ENCODE measurements at regions of chr11 and their contacts with region 1.

Region 1: DNA sequence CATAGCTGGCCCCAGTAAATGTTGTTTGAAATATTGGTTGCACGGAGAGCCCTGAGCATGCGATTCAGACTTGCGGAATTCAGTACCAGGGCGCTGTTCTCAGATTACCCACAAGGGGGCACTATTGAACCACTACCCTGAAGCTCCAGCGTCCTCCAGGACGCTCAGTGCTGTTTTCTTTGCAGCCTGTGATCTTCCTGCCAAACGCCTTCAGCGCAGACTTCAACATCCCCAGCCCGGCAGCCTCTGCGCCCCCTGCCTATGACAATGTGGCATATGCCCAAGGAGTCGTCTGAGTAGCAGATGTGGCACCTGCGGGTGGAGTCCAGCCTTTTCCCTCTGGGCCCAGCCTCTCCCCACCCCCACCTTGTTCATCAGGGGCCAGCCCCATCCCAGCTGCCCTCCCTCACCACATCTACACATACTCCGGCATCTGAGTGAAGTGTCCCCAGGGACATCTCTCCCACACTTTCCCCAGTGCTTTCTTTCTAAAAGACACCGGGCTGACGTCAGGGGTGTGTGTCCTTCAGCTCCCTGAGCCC is 9.6 kb upstream of the MS4A10 start:
- DNase-seq: peak; percentile 91
- H3K4me3 ChIP-seq: no peak overlapping the region
- H3K27ac ChIP-seq: no peak overlapping the region
- H3K4me1 ChIP-seq: no peaks in the 10 kb centered on the region
- CTCF ChIP-seq: peak; percentile 93

Region 2: GRCh38 chr11:60887556-60887955 is 112.1 kb after region 1 on chr11:
- CTCF ChIA-PET with region 1: no interaction called
- POLR2A ChIA-PET with region 1: no interaction called
- intact Hi-C with region 1: loop called (anchors 1 kb)
- DNase-seq: peak; percentile 57
- H3K4me3 ChIP-seq: no peak overlapping the region
- H3K27ac ChIP-seq: no peak overlapping the region
- H3K4me1 ChIP-seq: no peaks in the 10 kb centered on the region
- CTCF ChIP-seq: peak; percentile 79

Region 3: DNA sequence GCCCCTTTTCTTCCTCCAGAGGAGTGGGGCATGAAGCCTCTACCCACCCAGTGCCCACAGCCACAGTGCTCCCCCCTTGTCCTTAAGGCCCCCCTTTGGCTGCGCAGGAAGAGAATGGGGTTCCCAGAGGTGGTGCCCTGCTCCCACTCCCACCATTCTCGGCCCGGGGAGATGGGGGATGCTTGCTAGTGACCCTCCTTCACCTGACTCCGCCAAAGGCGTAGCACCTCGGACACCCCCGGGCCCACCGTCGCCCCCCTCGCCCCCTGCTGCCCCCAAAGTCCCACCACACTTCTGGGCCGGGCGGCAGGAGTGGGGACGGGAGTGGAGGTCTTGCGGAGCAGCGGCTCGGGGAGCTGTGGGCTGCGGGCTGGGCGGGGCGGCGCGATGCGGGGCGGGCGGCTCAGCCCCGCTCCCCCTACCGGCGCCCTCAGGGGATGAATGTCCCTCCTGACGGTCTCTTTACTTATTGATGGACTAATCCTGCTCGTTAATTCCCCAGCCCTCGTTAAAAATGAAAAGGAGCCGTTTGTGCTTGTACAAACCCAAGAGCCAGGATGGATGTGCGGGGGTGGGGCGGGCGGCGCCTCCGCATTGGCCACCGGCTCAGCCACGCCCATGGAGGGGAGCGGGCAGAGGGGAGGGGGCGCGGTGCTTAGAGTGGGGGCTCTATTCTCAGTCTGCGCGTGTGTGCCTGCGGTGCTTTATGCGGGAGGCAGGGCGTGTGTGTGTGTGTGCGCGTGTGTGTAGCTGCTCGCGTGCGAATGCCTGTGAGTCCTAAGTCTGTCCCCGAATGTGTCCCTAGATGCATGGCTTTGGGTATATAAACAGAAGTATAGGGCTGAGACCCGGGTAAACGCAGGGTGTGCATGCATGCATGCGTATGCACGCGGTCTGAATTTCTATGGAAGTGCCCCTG is 779.8 kb after region 1 on chr11:
- CTCF ChIA-PET with region 1: no interaction called
- POLR2A ChIA-PET with region 1: no interaction called
- intact Hi-C with region 1: no loop called
- DNase-seq: no peak
- H3K4me3 ChIP-seq: no peak overlapping the region
- H3K27ac ChIP-seq: no peak overlapping the region
- H3K4me1 ChIP-seq: no peaks in the 10 kb centered on the region
- CTCF ChIP-seq: no peak